ENCODE measurements at regions of chr17 and their contacts with region 1.

Region 1: DNA sequence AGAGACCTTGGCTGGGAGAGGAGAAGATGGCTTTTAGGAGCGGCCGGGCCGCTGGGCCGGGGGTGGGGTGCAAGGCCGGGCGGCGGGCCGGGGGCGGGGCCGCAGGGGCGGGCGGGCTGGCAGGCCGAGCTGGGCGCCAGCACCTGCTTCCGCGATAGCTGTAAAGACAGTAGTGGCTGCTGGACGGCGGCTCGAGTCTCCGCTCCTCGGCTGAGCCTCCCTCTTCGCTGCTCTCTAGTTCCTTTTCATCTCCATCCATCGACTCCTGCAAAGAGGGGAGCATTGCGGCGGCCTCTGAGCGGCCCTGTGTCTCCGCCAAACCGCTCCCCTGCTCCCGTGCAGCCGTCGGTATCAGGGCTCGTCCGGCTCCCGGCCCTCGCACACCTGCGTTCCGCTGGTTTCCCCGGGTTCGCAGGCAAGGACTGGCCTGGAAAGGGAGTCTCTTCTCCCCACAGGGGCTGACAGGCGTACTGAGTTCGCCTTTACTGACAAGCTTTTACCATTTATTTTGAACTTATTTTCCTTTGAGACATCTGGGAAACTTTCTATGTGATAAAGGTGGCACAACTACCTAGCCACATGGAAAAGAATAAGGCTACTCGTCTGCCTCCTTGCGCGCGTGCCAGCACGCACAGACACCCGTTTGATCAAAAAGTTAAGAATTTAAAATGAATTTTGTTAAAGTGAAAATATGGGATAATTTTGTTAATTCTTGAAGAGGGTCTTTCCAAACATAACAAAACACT is at the start of gene C17orf75:
- DNase-seq: peak; percentile 71 to 98 (median 82)

Region 2: DNA sequence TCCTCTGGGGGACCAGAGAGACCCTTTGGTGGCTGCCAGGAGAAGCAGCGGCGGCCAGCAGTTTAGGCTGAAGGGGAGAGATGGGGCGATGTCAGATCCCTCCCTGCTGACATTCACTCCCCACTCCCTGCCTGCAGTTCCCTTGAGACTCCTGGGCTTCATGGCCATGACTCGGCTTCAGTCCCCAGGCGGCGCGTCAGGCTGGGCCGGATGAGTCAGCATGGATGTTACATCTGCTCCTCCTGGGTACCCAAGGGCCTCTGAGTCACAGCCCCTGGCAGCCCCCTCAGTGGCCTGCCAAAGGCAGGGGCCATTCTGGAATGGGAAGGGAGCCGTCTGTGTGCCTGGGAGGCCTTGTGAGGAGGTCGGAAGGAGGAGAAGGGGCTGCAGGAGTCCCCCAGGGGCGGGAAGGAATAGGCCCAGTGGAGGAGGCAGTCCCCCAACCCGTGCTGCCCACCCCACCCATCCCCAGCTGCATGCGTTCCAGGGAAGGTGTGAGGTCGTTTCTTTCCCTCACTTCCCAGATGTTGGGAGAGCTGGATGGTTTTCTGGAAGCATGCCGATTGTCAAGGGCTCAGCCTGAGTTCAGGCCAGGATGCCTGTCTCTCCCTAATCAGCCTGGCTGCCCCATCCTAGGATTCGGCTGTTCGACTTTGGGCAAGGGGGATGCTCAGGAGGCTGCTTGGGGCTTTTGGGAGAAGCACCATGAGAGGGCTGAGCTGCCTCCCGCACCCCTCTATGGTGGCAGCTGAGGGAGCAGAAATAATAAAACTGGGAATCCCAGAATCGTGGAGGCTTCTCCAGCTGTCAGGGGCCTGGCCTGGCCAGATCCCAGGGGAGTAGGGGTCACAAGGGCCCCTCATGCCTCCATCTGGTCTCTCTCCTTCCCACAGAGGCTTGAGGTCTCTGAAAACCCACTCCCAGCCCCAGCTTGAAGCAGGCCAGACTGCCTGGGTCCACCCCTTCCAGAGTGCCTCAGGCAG is 66.7 kb before region 1 on chr17:
- intact Hi-C with region 1: no loop called
- DNase-seq: peak in 6 of 10 donors; percentile 45 to 90 (median 71)

Region 3: DNA sequence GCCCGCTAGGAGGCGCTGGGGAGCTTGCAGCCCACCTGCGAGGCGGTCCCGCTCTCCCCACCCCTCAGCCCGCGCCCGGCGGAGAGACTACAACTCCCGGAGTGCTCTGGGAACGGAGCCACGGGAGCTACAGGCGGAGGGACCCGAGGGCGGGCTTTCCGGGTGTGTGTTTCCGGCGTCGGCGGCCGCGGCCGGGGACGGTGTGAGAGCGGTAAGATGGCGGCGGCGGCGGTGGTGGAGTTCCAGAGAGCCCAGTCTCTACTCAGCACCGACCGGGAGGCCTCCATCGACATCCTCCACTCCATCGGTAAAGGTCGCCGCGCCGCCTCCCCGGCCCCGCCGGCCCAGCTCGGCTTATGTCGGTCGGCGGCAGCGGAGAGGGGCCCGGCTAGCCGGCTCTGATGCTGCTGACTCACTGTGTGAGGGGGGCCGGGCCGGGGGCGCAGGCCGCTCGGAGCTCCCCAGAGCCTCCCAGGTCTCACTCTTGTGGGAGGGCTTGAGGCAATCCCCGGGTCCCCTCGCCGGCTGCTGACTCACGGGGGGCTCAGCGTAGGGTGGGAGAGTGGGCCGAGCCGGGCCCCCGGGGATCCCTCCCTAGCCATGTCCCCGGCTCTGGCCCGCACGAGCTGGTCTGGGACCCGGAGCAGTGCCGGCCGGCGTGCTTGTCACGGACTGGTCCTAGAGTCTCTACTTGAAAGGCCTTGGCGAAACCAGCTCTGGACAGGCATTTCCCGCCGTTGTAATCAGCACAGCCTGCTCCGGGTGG is 102.5 kb after region 1 on chr17 and contains the start of gene PSMD11:
- intact Hi-C with region 1: loop called (anchors 5 kb)
- DNase-seq: peak; percentile 94 to 100 (median 98)